Motor neuron (in vitro differentiated cells): ENCODE measurements at regions of chr2 and their contacts with region 1.

Region 1: DNA sequence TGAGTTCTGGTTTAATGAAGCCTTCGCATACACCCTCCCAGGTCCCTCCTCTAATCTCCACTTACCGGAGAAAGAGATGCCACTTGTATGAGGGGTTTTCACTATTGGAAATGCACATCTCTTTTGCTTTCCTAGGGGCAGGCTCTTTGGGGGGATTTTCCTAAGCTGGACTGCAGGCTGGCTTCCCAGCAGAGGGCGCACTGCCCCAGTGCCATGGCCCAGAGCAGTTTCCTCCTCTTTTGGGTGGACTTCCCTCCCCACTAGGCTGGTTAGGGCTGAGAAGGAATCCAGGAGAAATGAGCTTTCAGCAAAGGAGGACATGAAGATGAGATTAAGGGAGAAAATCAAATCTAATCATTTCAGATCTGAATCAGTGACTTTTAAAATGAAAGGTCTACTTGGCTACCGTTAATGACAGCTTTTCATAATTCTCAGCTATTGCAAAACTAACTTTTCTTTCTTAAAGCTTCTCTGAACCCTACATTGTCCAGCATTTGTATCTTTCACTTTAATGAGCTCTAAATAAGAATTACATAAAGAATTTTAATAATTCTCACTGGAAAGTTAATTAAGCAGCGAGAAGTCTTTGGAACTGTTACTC is 784.1 kb upstream of the FANCL start:
- ATAC-seq: peak in 5 of 8 experiments; percentile 30 to 79 (median 50)
- H3K4me3 ChIP-seq: no peak overlapping the region
- H3K27ac ChIP-seq: no peak overlapping the region
- H3K4me1 ChIP-seq: no peaks in the 10 kb centered on the region

Region 2: DNA sequence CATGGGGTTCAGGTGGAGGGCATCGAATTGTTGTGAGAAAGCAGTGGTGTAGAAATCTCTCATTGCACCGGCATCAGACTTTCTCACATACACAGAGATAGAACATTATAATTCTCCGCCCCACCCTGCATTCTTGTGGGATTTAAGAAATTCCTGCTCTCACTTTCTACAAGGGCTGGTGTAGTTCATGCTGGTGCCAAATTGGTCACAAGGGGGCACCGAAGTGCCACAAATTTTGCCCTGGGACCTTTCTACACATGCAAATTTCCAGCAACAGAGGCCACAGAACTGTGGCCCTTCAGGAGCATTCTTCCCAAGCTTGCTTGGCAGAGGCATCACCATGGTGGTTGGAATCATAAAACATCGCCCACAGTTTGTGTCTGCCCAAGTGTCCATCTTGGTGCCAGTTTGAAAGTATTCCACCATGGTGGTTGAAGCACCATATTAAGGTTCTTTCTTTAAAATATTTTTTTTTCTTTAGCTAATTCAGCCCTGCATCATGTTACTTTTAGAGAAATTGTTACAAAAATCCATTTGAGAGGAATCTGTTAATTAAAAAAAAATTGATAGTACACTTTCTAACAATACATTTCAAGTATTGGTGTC is 263.0 kb before region 1 on chr2:
- in situ Hi-C with region 1: no loop called
- ATAC-seq: peak; percentile 77 to 99 (median 90)
- H3K4me3 ChIP-seq: no peak overlapping the region
- H3K27ac ChIP-seq: no peak overlapping the region
- H3K4me1 ChIP-seq: no peaks in the 10 kb centered on the region

Region 3: DNA sequence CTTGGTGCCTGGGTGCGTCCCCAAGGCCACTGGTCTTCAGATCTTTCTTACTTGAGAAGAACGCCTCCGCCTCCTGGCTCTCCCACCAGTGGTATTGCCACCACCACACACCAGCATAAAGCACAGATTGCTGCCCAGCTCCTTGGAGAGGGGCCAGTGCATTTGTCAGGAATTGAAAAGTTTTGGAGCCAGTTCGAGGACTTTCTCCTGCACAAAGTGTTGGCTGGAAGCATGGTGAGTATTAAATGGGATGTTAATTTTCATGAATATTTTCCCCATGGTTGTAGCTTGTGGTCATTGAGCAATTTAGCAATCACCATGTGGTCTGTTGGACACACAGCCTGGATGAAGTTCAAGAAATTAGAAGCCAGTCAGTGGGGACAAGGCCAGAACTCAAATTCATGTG is 99.6 kb before region 1 on chr2:
- in situ Hi-C with region 1: loop called in 1 of 9 experiments (anchors 25 kb)
- ATAC-seq: peak in 3 of 8 experiments; percentile 40 to 84 (median 75)
- H3K4me3 ChIP-seq: no peak overlapping the region
- H3K27ac ChIP-seq: no peak overlapping the region
- H3K4me1 ChIP-seq: peaks cover 11 to 39% of the 10 kb centered on the region in 2 donors